ENCODE measurements at regions of chr10 and their contacts with region 1.

Region 1: GRCh38 chr10:48353246-48353645 is 46.8 kb downstream of the MAPK8 start:
- DNase-seq: no peak
- H3K4me3 ChIP-seq: no peak overlapping the region
- H3K27ac ChIP-seq: no peak overlapping the region
- H3K4me1 ChIP-seq: no peaks in the 10 kb centered on the region
- H3K27me3 ChIP-seq: no peaks in the 10 kb centered on the region
- CTCF ChIP-seq: no peak

Region 2: DNA sequence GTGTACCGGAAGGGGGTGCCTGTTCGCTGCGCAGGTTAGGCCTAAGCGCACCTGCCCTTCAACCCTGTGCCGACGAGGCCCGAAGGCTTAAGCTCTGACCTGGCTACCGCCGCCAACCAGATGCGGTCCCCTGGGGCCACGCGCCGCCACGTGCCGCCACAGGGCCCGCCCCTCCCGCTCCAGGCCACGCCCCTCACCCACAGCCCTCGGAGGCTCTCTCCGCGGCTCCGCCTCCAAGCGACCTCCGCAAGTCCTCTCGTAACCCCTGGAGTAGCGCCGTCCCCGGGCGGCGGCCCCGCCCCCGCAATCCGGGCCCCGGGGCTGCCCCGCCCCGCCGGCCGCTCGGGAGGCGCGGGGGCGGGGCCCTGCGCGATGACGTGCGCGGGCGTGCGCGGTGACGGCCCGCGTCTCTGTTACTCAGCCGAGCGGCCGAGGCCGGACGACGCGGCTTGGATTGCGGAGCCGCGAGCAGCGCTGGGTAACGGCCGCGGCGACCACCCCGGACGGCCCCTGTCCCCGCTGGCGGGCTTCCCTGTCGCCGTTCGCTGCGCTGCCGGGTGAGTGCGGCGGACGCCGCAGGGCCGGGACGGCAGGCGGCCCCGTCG is 46.9 kb before region 1 on chr10 and contains the start of gene MAPK8:
- CTCF ChIA-PET with region 1: interaction called, 10 read pairs
- POLR2A ChIA-PET with region 1: no interaction called
- intact Hi-C with region 1: no loop called
- DNase-seq: peak; percentile 77 to 96
- H3K4me3 ChIP-seq: peak within 1 kb of the TSS; percentile 85
- H3K27ac ChIP-seq: peak within 1 kb of the TSS; percentile 14; the same call in 1 of the 2 replicates
- H3K4me1 ChIP-seq: peaks cover 45% of the 10 kb centered on the region
- H3K27me3 ChIP-seq: no peaks in the 10 kb centered on the region
- CTCF ChIP-seq: no peak
- total RNA-seq, gene MAPK8: 67.5 and 72.1 TPM in 2 replicates

Region 3: GRCh38 chr10:48363617-48364355 is 10.5 kb after region 1 on chr10:
- CTCF ChIA-PET with region 1: no interaction called
- POLR2A ChIA-PET with region 1: no interaction called
- intact Hi-C with region 1: no loop called
- DNase-seq: peak; percentile 28 to 42
- H3K4me3 ChIP-seq: no peak overlapping the region
- H3K27ac ChIP-seq: no peak overlapping the region
- H3K4me1 ChIP-seq: peaks cover 7% of the 10 kb centered on the region; the same call in 1 of the 2 replicates
- H3K27me3 ChIP-seq: no peaks in the 10 kb centered on the region
- CTCF ChIP-seq: peak; percentile 83

Region 4: DNA sequence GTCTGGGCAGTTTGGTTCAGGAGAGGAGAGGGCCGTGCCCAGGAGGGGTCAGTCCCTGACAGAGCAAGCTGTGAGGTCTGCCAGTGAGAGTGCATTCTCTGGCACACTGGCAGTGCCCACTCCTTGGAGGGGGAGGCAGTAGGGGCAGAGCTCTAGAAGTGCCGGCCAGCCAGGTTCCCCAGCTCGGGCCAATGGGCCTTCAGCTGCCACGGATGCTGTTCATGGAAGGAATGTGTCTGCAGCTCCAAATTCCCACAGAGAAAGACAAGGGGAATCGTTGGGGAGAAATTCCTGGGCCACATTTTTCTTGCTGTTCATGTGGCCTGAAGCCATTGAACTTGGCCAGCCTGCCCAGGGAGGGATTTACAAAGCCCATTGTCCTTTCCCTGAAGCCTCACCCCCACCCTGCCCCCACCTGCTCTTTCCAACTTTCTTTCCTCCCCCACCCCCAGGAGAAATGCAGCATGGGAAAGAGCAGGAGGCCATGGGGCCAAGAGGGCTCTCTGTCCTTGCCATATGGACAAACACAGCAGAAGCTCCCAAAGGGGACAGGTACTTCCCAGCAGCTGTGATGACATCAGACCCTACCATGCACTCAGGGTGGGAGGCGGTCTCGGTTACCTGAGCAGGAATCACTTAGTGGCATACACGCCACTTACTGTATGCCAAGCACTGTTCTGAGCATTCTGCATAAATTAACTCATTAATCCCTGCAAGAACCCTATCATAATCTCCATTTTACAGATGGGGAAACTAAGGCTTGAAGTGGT is 180.9 kb after region 1 on chr10:
- CTCF ChIA-PET with region 1: no interaction called
- POLR2A ChIA-PET with region 1: no interaction called
- intact Hi-C with region 1: no loop called
- DNase-seq: peak in 1 of 2 experiments; percentile 43
- H3K4me3 ChIP-seq: no peak overlapping the region
- H3K27ac ChIP-seq: no peak overlapping the region
- H3K4me1 ChIP-seq: no peaks in the 10 kb centered on the region
- H3K27me3 ChIP-seq: no peaks in the 10 kb centered on the region
- CTCF ChIP-seq: no peak